PC-3 (cell line): ENCODE measurements at regions of chr3 and their contacts with region 1.

Region 1: DNA sequence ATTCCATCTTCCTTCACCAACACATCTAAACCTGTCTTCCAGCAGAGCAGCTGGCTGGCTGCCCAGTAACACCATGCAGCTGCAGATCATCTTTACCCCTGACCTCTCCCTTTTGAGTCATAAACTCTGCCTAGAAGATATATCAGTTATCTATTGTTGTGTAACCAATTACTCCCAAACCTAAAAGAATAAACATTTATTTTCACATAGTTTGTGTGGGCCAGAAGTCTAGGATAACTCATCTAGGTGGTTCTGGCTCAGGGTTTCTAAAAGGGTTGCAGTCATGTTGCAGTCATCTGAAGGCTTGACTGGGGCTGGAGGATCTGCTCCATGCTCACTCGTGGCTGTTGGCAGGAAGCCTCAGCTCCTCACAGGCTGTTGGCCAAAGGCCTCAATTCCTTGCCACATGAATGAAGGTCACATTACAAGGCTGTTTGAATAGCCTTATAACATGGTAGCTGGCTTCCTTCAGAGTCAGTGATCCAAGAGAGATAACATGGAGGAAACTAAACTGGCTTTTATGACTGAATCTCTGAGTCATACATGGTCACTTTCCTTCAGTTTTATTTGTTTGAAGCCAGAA is 92.8 kb downstream of the GOLIM4 start:
- DNase-seq: peak; percentile 80
- ATAC-seq: peak; percentile 91
- H3K4me3 ChIP-seq: no peak overlapping the region
- H3K27ac ChIP-seq: peak overlapping the region; percentile 17; the same call in 1 of the 2 replicates
- H3K4me1 ChIP-seq: peaks cover 3% of the 10 kb centered on the region; the same call in 1 of the 2 replicates
- H3K27me3 ChIP-seq: no peaks in the 10 kb centered on the region
- CTCF ChIP-seq: no peak

Region 2: GRCh38 chr3:167941234-167941995 is 61.5 kb before region 1 on chr3:
- CTCF ChIA-PET with region 1: no interaction called
- POLR2A ChIA-PET with region 1: no interaction called
- intact Hi-C with region 1: loop called (anchors 2 kb)
- DNase-seq: peak; percentile 47
- ATAC-seq: peak; percentile 77
- H3K4me3 ChIP-seq: no peak overlapping the region
- H3K27ac ChIP-seq: no peak overlapping the region
- H3K4me1 ChIP-seq: no peaks in the 10 kb centered on the region; the same call in 1 of the 2 replicates
- H3K27me3 ChIP-seq: no peaks in the 10 kb centered on the region; the same call in 1 of the 2 replicates
- CTCF ChIP-seq: no peak

Region 3: GRCh38 chr3:168152149-168152548 is 149.3 kb after region 1 on chr3:
- CTCF ChIA-PET with region 1: no interaction called
- POLR2A ChIA-PET with region 1: no interaction called
- intact Hi-C with region 1: no loop called
- DNase-seq: no peak
- ATAC-seq: no peak
- H3K4me3 ChIP-seq: no peak overlapping the region
- H3K27ac ChIP-seq: no peak overlapping the region
- H3K4me1 ChIP-seq: no peaks in the 10 kb centered on the region
- H3K27me3 ChIP-seq: no peaks in the 10 kb centered on the region
- CTCF ChIP-seq: no peak

Region 4: GRCh38 chr3:168168743-168169142 is 165.9 kb after region 1 on chr3:
- CTCF ChIA-PET with region 1: no interaction called
- POLR2A ChIA-PET with region 1: no interaction called
- intact Hi-C with region 1: no loop called
- DNase-seq: no peak
- ATAC-seq: no peak
- H3K4me3 ChIP-seq: no peak overlapping the region
- H3K27ac ChIP-seq: no peak overlapping the region
- H3K4me1 ChIP-seq: no peaks in the 10 kb centered on the region; the same call in 1 of the 2 replicates
- H3K27me3 ChIP-seq: no peaks in the 10 kb centered on the region
- CTCF ChIP-seq: no peak

Region 5: GRCh38 chr3:168212664-168213285 is 209.9 kb after region 1 on chr3:
- CTCF ChIA-PET with region 1: no interaction called
- POLR2A ChIA-PET with region 1: no interaction called
- intact Hi-C with region 1: no loop called
- DNase-seq: no peak
- ATAC-seq: no peak
- H3K4me3 ChIP-seq: no peak overlapping the region
- H3K27ac ChIP-seq: no peak overlapping the region
- H3K4me1 ChIP-seq: no peaks in the 10 kb centered on the region
- H3K27me3 ChIP-seq: no peaks in the 10 kb centered on the region
- CTCF ChIP-seq: no peak